ENCODE measurements at regions of chr18 and their contacts with region 1.

Region 1: GRCh38 chr18:63311118-63312018 is 8.2 kb downstream of the BCL2 start:
- DNase-seq: no peak
- ATAC-seq: peak in 1 of 2 donors; percentile 11
- H3K4me3 Mint-ChIP-seq: peak overlapping the region in 9 of 10 donors; percentile 34 to 100 (median 92)
- H3K27ac Mint-ChIP-seq: peak overlapping the region; percentile 51 to 90 (median 83)
- H3K4me1 Mint-ChIP-seq: peaks cover 48 to 97% (median 90%) of the 10 kb centered on the region in 4 donors
- H3K27me3 Mint-ChIP-seq: no peaks in the 10 kb centered on the region

Region 2: DNA sequence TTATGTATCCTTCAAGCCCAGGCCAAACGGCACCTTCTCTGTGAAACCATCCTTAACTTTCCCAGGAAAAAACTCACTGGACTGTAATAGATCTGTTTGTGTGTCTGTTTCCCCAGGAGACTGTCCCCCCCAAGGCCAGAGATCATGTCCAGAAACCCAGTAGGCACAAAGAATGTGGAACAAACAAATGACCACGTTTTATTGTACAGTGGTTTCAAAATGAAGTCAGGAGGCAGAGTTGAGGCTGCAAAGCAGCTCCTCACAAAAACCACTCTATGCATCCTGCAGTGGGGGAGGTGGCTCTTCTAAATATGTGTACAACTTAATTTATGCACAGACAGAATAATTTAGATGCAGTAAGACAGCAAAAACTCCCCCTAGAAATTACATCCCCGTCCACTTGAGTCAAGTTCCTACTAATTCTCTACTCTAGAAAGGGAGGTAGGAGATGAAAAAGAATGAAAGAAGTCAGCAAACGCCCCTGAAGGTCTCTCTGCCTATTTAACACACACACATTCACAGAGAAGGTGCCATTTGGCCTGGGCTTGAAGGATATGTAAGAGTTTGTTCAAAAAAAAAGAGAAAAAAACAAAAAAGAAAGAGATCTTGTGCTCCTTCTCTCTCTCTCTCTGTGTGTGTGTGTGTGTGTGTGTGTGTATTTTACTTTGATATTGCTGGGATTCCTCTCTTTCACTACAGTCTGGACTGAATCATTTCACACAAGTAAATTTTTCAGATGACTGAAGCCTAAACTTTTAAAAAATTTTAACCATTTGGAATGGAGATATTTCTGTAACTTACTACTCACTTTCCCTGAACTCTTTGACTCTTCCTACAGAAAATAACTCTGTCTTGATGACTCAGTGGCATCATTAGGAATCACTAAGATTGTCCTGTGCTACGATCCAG is 11.3 kb before region 1 on chr18:
- POLR2A ChIA-PET with region 1: interaction called, 42 read pairs
- DNase-seq: no peak
- ATAC-seq: peak; percentile 57 to 72
- H3K4me3 Mint-ChIP-seq: peak overlapping the region; percentile 43 to 75 (median 64)
- H3K27ac Mint-ChIP-seq: peak overlapping the region; percentile 53 to 96 (median 91)
- H3K4me1 Mint-ChIP-seq: peaks cover 39 to 84% (median 80%) of the 10 kb centered on the region in 4 donors
- H3K27me3 Mint-ChIP-seq: no peaks in the 10 kb centered on the region